ENCODE measurements at regions of chr2 and their contacts with region 1.

Region 1: DNA sequence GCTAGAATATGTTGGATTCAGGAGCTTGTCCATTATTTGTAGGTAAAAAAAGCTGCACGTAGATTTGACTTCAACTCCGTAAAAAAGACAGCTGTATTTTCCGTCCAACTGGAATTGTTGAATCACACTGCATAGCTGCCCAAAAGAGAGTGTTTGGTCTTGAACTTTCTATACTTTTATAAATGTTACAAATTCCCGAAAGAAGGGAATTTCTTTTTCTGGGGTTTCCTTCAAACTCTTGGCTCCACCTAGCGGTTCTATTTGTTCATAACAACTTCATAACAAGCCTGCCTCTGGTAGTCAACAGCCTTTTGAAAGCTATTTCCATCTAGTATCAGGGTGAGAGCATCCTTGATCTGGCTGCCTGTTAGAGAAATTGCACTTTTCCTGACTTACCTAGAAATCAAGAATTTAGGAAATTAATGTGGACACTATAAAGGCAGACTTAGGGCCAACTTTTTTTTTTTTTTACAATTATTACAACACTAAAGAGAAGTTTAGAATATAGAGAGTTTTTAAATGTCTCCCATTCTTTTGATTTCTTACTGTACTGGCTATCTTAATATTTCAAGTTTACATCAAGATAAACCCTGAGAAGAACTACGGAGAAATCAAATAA is 48.1 kb downstream of the TMEM185B start:
- DNase-seq: no peak
- ATAC-seq: no peak
- H3K4me3 Mint-ChIP-seq: no peak overlapping the region
- H3K27ac Mint-ChIP-seq: peak overlapping the region; percentile 69
- H3K4me1 Mint-ChIP-seq: peaks cover 44% of the 10 kb centered on the region
- H3K27me3 Mint-ChIP-seq: no peaks in the 10 kb centered on the region
- CTCF ChIP-seq: peak; percentile 93

Region 2: DNA sequence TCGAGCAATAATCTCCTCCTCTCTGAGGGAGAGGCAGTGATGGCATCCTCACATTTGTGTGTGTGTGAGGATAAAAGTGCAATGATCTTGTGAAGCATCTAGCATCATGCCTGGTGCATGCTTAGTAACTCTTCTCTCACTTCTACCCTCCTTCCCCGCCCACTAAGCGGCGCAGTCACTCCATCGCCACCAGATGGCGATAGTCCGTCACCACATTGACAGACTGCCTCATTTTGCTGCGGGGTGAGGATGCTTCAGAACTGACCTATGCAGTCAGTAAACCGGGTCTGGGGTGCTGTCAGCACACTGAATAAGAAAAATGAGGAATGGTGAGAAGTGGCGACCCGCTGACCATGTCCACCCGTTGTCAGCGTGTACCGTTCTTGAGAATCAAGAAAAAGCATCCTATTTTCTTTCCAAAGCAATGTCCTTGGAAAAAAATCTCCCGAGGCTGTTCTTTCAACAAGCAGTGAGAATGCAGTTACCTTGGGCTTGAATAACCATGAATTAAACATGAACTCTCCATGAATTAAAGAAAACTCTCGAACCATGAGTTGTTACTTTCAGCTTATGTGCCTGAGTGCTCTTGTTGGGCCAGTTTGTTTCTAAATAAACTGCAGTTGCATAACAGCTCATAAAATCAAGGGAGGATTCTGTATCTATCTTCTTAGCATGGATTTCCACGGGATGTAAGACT is 533.4 kb before region 1 on chr2:
- CTCF ChIA-PET with region 1: interaction called, 58 read pairs
- POLR2A ChIA-PET with region 1: no interaction called
- intact Hi-C with region 1: no loop called
- DNase-seq: peak; percentile 82
- ATAC-seq: peak; percentile 99
- H3K4me3 Mint-ChIP-seq: no peak overlapping the region
- H3K27ac Mint-ChIP-seq: no peak overlapping the region
- H3K4me1 Mint-ChIP-seq: peaks cover 2% of the 10 kb centered on the region
- H3K27me3 Mint-ChIP-seq: no peaks in the 10 kb centered on the region
- CTCF ChIP-seq: peak; percentile 84

Region 3: GRCh38 chr2:119702918-119703401 is 472.1 kb before region 1 on chr2:
- CTCF ChIA-PET with region 1: interaction called, 44 read pairs
- POLR2A ChIA-PET with region 1: no interaction called
- intact Hi-C with region 1: loop called (anchors 2 kb)
- DNase-seq: peak; percentile 75
- ATAC-seq: peak; percentile 92
- H3K4me3 Mint-ChIP-seq: no peak overlapping the region
- H3K27ac Mint-ChIP-seq: no peak overlapping the region
- H3K4me1 Mint-ChIP-seq: peaks cover 12% of the 10 kb centered on the region
- H3K27me3 Mint-ChIP-seq: no peaks in the 10 kb centered on the region
- CTCF ChIP-seq: peak; percentile 93

Region 4: GRCh38 chr2:119759451-119760236 is 415.4 kb before region 1 on chr2 and contains the start of gene PTPN4:
- CTCF ChIA-PET with region 1: interaction called, 82 read pairs
- POLR2A ChIA-PET with region 1: interaction called, 3 read pairs
- intact Hi-C with region 1: no loop called
- DNase-seq: peak; percentile 97
- ATAC-seq: peak; percentile 94
- H3K4me3 Mint-ChIP-seq: peak within 1 kb of the TSS; percentile 81
- H3K27ac Mint-ChIP-seq: peak within 1 kb of the TSS; percentile 97
- H3K4me1 Mint-ChIP-seq: peaks cover 47% of the 10 kb centered on the region
- H3K27me3 Mint-ChIP-seq: no peaks in the 10 kb centered on the region
- CTCF ChIP-seq: no peak
- total RNA-seq, gene PTPN4: 34.4 to 40.2 TPM

Region 5: DNA sequence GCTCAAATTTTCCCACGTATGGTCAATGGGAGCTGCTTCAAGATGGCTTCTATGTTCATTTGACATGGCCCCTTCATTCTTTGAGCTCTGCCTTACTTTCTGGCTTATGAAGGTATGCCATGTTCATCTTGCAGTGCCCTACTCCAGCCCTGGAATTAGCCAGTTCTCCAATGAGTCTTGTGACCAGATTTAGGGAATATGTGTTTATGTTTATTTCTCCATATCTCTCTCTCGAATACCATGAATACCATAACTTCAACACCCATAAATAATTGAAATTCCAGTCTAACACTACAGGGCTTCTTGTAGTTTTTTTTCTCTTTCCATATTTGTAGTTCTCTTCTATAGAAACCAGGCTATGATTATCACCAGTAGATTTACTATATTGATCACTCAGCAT is 122.5 kb before region 1 on chr2:
- CTCF ChIA-PET with region 1: no interaction called
- POLR2A ChIA-PET with region 1: no interaction called
- intact Hi-C with region 1: no loop called
- DNase-seq: no peak
- ATAC-seq: no peak
- H3K4me3 Mint-ChIP-seq: no peak overlapping the region
- H3K27ac Mint-ChIP-seq: no peak overlapping the region
- H3K4me1 Mint-ChIP-seq: no peaks in the 10 kb centered on the region
- H3K27me3 Mint-ChIP-seq: no peaks in the 10 kb centered on the region
- CTCF ChIP-seq: no peak

Region 6: DNA sequence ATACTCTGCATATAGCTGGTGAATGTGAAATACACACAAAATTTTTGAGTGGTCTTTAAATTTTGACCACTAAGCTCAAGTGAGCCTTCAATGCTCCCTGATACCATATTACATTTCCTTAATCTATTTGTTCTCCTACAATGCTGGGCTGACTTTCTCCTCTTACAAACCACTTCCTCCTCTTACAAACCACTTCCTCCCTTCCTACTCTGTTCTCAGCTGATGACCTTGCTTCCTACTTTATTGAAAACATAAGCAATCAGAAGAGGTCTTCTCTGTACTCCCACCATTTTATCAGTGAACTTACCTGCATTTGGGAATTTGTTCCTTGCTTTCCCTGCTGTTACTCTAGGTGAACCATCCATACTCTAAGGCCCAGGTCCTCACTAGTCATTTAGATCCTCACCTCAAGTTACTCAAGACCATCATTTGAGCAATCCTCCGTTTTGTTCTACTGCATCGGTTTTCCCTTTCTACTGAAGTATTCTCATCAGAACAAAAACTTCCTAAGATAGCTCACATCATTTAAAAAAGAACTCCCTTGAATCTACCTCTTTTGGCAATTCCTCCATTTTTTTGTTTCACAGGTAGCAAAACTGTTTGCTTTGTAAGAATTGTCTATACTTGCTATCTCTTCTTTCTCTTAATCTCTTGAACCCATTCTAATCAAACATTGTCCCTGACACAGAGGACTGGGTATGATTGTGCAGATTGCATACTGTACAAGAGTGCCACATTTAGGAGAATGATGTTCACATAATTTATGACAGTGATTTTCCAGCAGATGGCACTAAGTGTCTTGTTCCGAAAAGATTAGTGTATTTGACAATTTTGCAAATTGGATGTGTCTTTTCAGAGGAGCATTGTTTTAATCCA is 65.6 kb before region 1 on chr2:
- CTCF ChIA-PET with region 1: interaction called, 135 read pairs
- POLR2A ChIA-PET with region 1: interaction called, 4 read pairs
- intact Hi-C with region 1: loop called (anchors 1 kb)
- DNase-seq: no peak
- ATAC-seq: peak; percentile 68
- H3K4me3 Mint-ChIP-seq: no peak overlapping the region
- H3K27ac Mint-ChIP-seq: peak overlapping the region; percentile 87
- H3K4me1 Mint-ChIP-seq: peaks cover 19% of the 10 kb centered on the region
- H3K27me3 Mint-ChIP-seq: no peaks in the 10 kb centered on the region
- CTCF ChIP-seq: peak; percentile 54

Region 7: DNA sequence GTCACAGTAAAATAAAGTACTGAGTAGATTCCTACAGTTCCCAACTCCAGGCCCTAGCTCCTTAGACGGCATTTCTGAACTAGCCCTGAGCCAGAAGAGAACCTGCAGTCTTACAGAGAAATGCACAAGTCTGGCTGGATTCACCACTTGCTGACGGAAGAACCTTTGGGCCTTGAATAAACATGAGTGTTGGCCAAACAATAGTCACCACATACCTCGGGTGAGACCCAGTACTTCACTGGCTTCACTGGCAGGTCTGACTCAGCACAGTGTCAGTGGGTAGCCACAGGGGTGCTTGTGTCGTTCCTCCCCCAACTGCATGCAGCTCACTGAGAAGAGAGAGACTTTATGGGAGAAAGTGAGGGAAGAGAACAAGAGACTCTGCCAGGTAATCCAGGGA is 40.8 kb before region 1 on chr2:
- CTCF ChIA-PET with region 1: interaction called, 15 read pairs
- POLR2A ChIA-PET with region 1: no interaction called
- intact Hi-C with region 1: no loop called
- DNase-seq: no peak
- ATAC-seq: no peak
- H3K4me3 Mint-ChIP-seq: no peak overlapping the region
- H3K27ac Mint-ChIP-seq: no peak overlapping the region
- H3K4me1 Mint-ChIP-seq: no peaks in the 10 kb centered on the region
- H3K27me3 Mint-ChIP-seq: no peaks in the 10 kb centered on the region
- CTCF ChIP-seq: no peak

Region 8: GRCh38 chr2:120231974-120232635 is 57.0 kb after region 1 on chr2:
- CTCF ChIA-PET with region 1: interaction called, 8 read pairs
- POLR2A ChIA-PET with region 1: interaction called, 13 read pairs
- intact Hi-C with region 1: no loop called
- DNase-seq: peak; percentile 85
- ATAC-seq: peak; percentile 90
- H3K4me3 Mint-ChIP-seq: peak overlapping the region; percentile 90
- H3K27ac Mint-ChIP-seq: peak overlapping the region; percentile 99
- H3K4me1 Mint-ChIP-seq: peaks cover 57% of the 10 kb centered on the region
- H3K27me3 Mint-ChIP-seq: no peaks in the 10 kb centered on the region
- CTCF ChIP-seq: no peak

Measured in activated CD8-positive, alpha-beta T cell treated with anti-CD3 and anti-CD28 coated beads for 36 hours (primary cell).